CD4-positive, alpha-beta T cell (primary cell): ENCODE measurements at regions of chr3 and their contacts with region 1.

Region 1: DNA sequence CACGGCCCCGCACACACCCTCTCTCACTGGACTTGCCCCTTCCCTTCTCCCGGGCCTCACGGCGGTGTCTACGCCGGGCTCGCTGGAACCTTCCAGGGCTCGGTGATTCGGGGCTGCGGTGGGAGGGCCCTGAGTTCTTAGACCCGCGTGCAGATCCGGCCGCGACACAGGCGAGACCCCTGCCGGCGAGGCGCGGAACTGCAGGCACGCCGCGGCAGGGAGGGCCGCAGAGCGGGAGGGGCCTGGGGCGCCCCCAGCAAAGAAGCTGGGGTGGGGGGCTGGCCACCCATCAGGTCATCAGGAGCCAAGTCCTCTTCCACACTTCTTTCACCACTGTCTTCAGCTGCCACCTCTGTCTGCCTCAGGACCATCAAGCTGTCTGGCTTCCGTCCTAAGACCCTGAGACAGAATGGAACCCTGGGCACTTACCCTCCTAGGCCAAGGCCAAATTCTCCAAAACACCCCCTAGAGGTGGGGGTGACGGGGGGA is 164.5 kb downstream of the XXYLT1 start:
- DNase-seq: peak; percentile 36 to 84 (median 60)
- ATAC-seq: peak; percentile 92
- H3K4me3 ChIP-seq: peak overlapping the region; percentile 6
- H3K4me3 Mint-ChIP-seq: no peak overlapping the region
- H3K27ac ChIP-seq: no peak overlapping the region
- H3K27ac Mint-ChIP-seq: no peak overlapping the region
- H3K4me1 ChIP-seq: peaks cover 8% of the 10 kb centered on the region
- H3K4me1 Mint-ChIP-seq: peaks cover 7% of the 10 kb centered on the region
- H3K27me3 ChIP-seq: no peaks in the 10 kb centered on the region
- H3K27me3 Mint-ChIP-seq: no peaks in the 10 kb centered on the region
- CTCF ChIP-seq: peak; percentile 99

Region 2: GRCh38 chr3:194779729-194780224 is 326.7 kb before region 1 on chr3:
- CTCF ChIA-PET with region 1: no interaction called
- POLR2A ChIA-PET with region 1: no interaction called
- intact Hi-C with region 1: loop called in 1 of 2 experiments (anchors 5 kb)
- DNase-seq: no peak
- ATAC-seq: no peak
- H3K4me3 ChIP-seq: no peak overlapping the region
- H3K4me3 Mint-ChIP-seq: no peak overlapping the region
- H3K27ac ChIP-seq: no peak overlapping the region
- H3K27ac Mint-ChIP-seq: no peak overlapping the region
- H3K4me1 ChIP-seq: no peaks in the 10 kb centered on the region
- H3K4me1 Mint-ChIP-seq: no peaks in the 10 kb centered on the region
- H3K27me3 ChIP-seq: peaks cover 0 to 3% of the 10 kb centered on the region in 2 experiments
- H3K27me3 Mint-ChIP-seq: peaks cover 28% of the 10 kb centered on the region
- CTCF ChIP-seq: no peak

Region 3: DNA sequence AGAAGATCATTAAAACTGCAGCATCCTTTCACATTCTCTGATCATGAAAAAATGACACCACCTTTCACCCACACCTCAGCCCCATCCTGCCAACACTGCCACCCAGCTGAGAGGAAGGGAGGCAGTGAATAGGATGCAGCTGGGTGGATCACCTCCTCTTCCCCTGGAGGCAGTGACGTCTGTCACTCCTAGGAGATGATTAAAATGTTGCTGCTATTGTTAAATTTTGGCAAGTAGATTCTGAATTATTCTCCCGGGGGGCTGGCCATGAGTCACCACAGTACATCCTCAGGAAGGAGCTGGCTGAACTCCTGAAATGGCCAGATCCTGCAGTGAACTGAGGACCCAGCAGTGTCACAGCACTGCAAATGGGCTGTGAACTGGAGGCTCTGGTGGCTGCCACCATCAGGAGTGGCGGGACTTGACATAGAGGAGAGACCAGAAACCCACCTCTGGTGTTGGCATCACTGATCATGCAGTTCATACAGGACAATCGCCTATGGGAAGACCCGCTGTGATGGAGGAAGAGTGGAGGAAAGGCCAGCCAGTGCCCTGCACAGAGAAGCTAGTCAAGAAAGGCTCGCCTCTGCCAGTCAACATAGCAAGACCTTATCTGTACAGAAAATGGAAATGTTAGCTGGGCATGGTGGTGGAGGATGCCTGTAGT is 221.7 kb before region 1 on chr3:
- CTCF ChIA-PET with region 1: no interaction called
- POLR2A ChIA-PET with region 1: no interaction called
- intact Hi-C with region 1: no loop called
- DNase-seq: no peak
- ATAC-seq: no peak
- H3K4me3 ChIP-seq: no peak overlapping the region
- H3K4me3 Mint-ChIP-seq: no peak overlapping the region
- H3K27ac ChIP-seq: no peak overlapping the region
- H3K27ac Mint-ChIP-seq: no peak overlapping the region
- H3K4me1 ChIP-seq: peaks cover 7% of the 10 kb centered on the region
- H3K4me1 Mint-ChIP-seq: peaks cover 4% of the 10 kb centered on the region
- H3K27me3 ChIP-seq: no peaks in the 10 kb centered on the region
- H3K27me3 Mint-ChIP-seq: peaks cover 5% of the 10 kb centered on the region
- CTCF ChIP-seq: no peak

Region 4: DNA sequence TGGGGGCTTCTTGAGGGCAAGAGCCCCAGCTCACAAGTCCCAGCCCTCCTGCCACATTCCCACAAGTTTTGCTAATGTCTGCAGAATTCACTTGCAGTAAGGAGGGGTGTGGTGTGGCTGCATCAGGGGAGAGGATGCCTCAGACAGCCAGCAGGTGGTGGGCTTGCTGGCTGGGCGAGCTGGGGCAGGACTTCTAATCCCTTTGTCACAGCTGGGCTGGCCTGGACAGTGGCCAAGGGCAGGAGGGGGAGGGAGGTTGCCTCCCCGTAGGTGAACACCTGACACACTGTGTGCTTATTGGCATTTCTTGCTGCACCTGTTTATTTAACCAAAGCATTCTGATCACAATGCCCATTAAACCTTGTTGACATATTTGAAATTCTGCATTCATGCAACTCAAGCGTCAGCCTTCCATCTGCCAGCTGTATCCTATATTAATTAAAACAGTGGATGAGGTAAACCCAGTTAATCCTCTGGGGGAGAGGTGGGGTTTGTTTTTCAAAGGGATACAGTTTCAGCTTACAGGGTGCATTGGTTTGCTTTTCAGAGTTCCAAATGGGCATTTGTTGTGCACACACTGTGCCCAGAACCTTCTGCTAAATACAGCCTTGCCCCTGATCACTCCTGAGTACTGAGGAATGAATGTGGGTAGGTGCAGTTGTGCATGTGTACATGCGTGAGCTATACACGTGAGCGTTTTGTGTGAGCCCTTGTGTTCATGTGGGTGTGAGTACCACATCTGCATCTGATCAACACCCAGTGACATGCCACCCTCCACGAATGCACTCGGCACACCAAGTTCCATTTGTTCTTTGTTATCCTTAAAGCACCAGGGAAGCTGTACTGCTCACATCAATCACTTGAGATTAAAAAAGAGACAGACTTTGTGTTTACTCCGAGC is 104.3 kb before region 1 on chr3:
- CTCF ChIA-PET with region 1: no interaction called
- POLR2A ChIA-PET with region 1: no interaction called
- intact Hi-C with region 1: loop called (anchors 1 to 5 kb)
- DNase-seq: peak in 7 of 14 experiments; percentile 5 to 50 (median 12)
- ATAC-seq: no peak
- H3K4me3 ChIP-seq: no peak overlapping the region
- H3K4me3 Mint-ChIP-seq: no peak overlapping the region
- H3K27ac ChIP-seq: no peak overlapping the region
- H3K27ac Mint-ChIP-seq: no peak overlapping the region
- H3K4me1 ChIP-seq: no peaks in the 10 kb centered on the region
- H3K4me1 Mint-ChIP-seq: no peaks in the 10 kb centered on the region
- H3K27me3 ChIP-seq: peaks cover 0 to 2% of the 10 kb centered on the region in 2 experiments
- H3K27me3 Mint-ChIP-seq: peaks cover 11% of the 10 kb centered on the region
- CTCF ChIP-seq: peak; percentile 22